HEK293T (cell line): ENCODE measurements at regions of chr2 and their contacts with region 1.

Region 1: GRCh38 chr2:222561817-222562645 is 93.9 kb downstream of the FARSB start:
- DNase-seq: peak; percentile 71

Region 2: DNA sequence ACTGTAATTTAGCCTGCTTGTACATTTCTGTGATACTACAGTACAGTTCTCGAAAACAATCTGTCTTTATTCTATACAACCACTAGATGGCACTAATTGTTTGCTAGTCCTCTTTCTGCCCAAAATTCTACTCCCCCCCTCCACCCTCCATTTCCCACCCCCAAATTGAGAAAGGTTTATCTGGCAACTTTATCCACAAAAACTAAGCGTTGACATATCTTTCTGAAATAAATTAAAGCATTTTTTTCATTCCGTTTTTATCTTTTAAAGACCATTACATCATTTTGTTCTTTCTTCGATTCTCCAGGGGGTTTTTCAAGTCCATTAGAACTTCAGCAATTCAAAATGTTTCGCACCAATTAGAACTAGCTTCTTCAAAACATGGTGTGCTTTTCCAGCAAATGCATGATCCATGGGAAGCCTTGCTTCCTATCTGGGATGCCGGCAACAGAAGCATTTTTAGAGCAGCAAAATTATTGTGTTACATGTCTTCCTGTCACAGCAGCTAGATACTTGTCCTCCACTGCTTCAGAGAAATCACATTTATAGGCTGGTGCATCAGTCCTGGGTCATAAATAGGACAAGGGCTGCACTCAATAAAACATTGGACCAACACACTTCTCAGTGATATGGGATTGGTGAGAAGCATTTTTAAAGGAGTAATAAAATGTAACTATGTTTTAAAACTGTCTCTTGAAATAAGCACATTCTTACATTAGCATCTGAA is 504.5 kb before region 1 on chr2:
- CTCF ChIA-PET with region 1: interaction called, 11 read pairs
- POLR2A ChIA-PET with region 1: no interaction called
- DNase-seq: peak; percentile 41

Region 3: DNA sequence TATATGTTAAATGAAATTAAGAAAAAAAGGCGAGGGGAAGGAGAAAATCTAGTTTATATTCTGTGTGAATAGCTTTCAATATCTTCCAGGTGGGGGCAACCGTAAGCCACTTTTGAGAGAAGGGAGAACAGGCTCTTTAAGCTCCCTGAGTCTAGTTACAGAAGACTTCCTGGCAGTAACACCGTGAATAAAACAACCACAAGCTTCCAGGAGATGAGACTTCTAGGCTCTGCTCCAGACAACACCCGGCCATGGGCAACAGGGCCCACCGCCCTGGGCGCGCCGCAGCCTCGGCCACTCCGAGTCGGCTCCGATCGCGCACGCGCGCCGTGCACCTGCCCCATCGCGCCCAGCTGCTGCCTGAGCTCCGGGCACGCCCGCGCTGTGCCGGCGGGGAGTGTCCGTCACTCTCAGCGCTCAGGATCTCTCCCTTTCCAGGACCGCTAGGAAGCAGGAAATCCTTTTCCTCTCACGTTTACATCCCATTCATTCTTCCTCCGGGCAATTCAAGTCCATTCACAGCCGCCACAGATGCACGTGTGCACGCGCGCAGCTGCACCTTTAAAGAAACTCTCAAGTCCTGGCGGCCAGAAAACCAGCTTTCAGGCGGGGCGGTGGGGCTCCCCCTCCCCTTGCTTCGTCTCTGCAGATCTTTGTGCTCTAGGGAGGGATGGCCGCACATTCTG is 243.9 kb before region 1 on chr2:
- CTCF ChIA-PET with region 1: interaction called, 14 read pairs
- POLR2A ChIA-PET with region 1: interaction called, 4 read pairs
- DNase-seq: peak; percentile 81

Region 4: DNA sequence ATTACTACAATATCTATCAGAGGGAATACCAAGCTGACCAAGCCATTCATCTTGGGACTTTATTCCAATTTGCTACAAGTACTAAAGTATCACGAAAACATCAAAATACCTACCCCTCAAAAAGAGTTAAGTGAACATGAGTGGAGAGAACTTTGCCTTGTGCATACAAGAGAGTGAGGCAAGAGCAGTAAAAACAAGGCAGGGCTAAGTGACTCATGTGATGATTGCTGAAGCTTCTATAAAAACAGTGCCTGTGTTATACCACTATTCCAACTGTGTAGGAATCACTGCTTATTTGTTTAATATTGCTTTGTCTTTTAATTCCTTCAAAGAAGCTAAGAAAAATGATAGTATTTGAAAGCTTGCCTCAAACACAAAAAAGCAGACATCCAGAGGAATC is 32.6 kb after region 1 on chr2:
- CTCF ChIA-PET with region 1: no interaction called
- POLR2A ChIA-PET with region 1: no interaction called
- DNase-seq: no peak

Region 5: DNA sequence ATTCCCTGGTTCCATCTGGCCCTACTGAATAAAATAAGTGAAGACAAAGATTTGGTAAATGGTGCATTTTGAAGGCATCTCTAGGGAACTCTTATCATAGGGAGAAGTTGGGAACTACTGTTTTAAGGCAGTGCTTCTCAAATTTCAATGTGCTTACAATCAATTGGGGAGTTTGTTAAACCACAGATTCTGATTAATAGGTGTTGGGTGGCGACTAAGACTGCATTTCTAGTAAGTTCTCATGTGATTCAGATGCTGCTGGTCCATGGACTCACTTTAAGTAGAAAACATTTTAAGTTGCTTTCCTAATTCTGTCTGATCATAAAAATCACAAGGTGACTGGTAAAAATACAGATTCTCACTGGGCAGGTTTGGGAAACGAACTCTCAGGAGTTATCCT is 79.3 kb after region 1 on chr2:
- CTCF ChIA-PET with region 1: no interaction called
- POLR2A ChIA-PET with region 1: no interaction called
- DNase-seq: no peak